ENCODE measurements at regions of chr5 and their contacts with region 1.

Region 1: GRCh38 chr5:143119291-143119769 is 284.2 kb downstream of the NR3C1 start:
- DNase-seq: no peak
- ATAC-seq: peak in 1 of 8 donors; percentile 34
- H3K4me3 ChIP-seq: no peak overlapping the region
- H3K27ac ChIP-seq: peak overlapping the region in 1 of 10 donors; percentile 73
- H3K4me1 ChIP-seq: peaks cover 6 to 73% (median 38%) of the 10 kb centered on the region in 9 donors
- H3K27me3 ChIP-seq: no peaks in the 10 kb centered on the region
- CTCF ChIP-seq: no peak

Region 2: GRCh38 chr5:143279698-143280097 is 160.4 kb after region 1 on chr5:
- intact Hi-C with region 1: loop called in 1 of 10 experiments (anchors 10 kb)
- DNase-seq: no peak
- ATAC-seq: no peak
- H3K4me3 ChIP-seq: no peak overlapping the region
- H3K27ac ChIP-seq: no peak overlapping the region
- H3K4me1 ChIP-seq: peaks cover 0 to 8% (median 0%) of the 10 kb centered on the region in 9 donors
- H3K27me3 ChIP-seq: no peaks in the 10 kb centered on the region
- CTCF ChIP-seq: no peak

Measured in heart right ventricle (tissue), 16 donors.